Endothelial cell of umbilical vein (primary cell): ENCODE measurements at regions of chr10 and their contacts with region 1.

Region 1: GRCh38 chr10:4767033-4767814 is 58.8 kb upstream of the AKR1E2 start:
- DNase-seq: peak; percentile 74
- H3K4me3 ChIP-seq: no peak overlapping the region
- H3K27ac ChIP-seq: peak overlapping the region; percentile 96
- H3K4me1 ChIP-seq: peaks cover 83% of the 10 kb centered on the region
- H3K27me3 ChIP-seq: no peaks in the 10 kb centered on the region
- CTCF ChIP-seq: peak; percentile 49 to 50
- POLR2A ChIP-seq: no peak

Region 2: GRCh38 chr10:3095373-3096139 is 1671.7 kb before region 1 on chr10:
- CTCF ChIA-PET with region 1: no interaction called
- POLR2A ChIA-PET with region 1: no interaction called
- dilution Hi-C with region 1: no loop called
- intact Hi-C with region 1: loop called (anchors 10 kb)
- DNase-seq: peak; percentile 98
- H3K4me3 ChIP-seq: peak overlapping the region in 1 of 3 experiments; percentile 43
- H3K27ac ChIP-seq: peak overlapping the region; percentile 100
- H3K4me1 ChIP-seq: peaks cover 65% of the 10 kb centered on the region
- H3K27me3 ChIP-seq: no peaks in the 10 kb centered on the region
- CTCF ChIP-seq: no peak
- POLR2A ChIP-seq: peak; percentile 69

Region 3: GRCh38 chr10:3785257-3785850 is 981.9 kb before region 1 on chr10:
- CTCF ChIA-PET with region 1: interaction called, 3 read pairs
- POLR2A ChIA-PET with region 1: interaction called, 9 read pairs
- dilution Hi-C with region 1: no loop called
- intact Hi-C with region 1: loop called (anchors 1 kb)
- DNase-seq: peak; percentile 98
- H3K4me3 ChIP-seq: peak overlapping the region; percentile 22 to 95 (median 44)
- H3K27ac ChIP-seq: peak overlapping the region; percentile 98
- H3K4me1 ChIP-seq: peaks cover 26% of the 10 kb centered on the region
- H3K27me3 ChIP-seq: no peaks in the 10 kb centered on the region
- CTCF ChIP-seq: no peak
- POLR2A ChIP-seq: peak; percentile 99

Region 4: GRCh38 chr10:3935141-3935540 is 832.1 kb before region 1 on chr10:
- CTCF ChIA-PET with region 1: no interaction called
- POLR2A ChIA-PET with region 1: no interaction called
- dilution Hi-C with region 1: no loop called
- intact Hi-C with region 1: loop called (anchors 5 kb)
- DNase-seq: peak; percentile 26
- H3K4me3 ChIP-seq: no peak overlapping the region
- H3K27ac ChIP-seq: peak overlapping the region; percentile 75
- H3K4me1 ChIP-seq: peaks cover 24% of the 10 kb centered on the region
- H3K27me3 ChIP-seq: no peaks in the 10 kb centered on the region
- CTCF ChIP-seq: no peak
- POLR2A ChIP-seq: no peak

Region 5: GRCh38 chr10:4372601-4373000 is 394.6 kb before region 1 on chr10:
- CTCF ChIA-PET with region 1: no interaction called
- POLR2A ChIA-PET with region 1: no interaction called
- dilution Hi-C with region 1: no loop called
- intact Hi-C with region 1: loop called (anchors 2 kb)
- DNase-seq: peak; percentile 93
- H3K4me3 ChIP-seq: no peak overlapping the region
- H3K27ac ChIP-seq: peak overlapping the region; percentile 91
- H3K4me1 ChIP-seq: peaks cover 14% of the 10 kb centered on the region
- H3K27me3 ChIP-seq: no peaks in the 10 kb centered on the region
- CTCF ChIP-seq: no peak
- POLR2A ChIP-seq: no peak

Region 6: DNA sequence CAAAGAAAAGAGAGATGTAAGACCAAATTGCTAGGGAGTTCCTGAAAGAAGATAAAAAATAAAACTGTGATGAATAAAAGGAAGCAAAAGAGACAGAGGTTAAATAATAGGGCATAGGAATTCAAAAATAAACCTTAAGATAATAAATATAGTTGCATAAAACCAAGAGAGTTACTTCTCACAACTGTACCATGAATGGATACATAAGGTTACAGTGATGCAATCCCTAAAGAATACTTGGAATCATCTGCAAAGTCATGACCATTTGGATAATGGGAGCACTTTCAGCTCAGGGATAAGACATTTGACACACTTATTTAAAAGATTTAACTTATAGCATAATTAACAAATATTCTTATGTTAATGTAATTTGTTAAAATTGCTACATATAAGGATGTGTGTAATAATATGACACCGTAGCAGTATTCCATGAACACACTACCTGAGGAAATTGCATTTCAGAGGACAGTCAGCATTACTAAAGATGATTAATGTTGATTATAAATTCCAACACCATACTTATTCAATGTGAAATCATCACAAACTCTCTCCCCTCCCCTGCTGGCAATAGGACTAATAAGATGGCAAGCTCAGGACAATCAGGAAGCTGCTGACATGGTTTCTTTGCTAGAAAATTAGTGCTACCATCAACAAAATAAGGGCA is 143.3 kb before region 1 on chr10:
- CTCF ChIA-PET with region 1: no interaction called
- POLR2A ChIA-PET with region 1: no interaction called
- dilution Hi-C with region 1: no loop called
- intact Hi-C with region 1: no loop called
- DNase-seq: no peak
- H3K4me3 ChIP-seq: no peak overlapping the region
- H3K27ac ChIP-seq: no peak overlapping the region
- H3K4me1 ChIP-seq: no peaks in the 10 kb centered on the region
- H3K27me3 ChIP-seq: no peaks in the 10 kb centered on the region
- CTCF ChIP-seq: no peak
- POLR2A ChIP-seq: no peak

Region 7: GRCh38 chr10:4656576-4657182 is 110.5 kb before region 1 on chr10:
- CTCF ChIA-PET with region 1: interaction called, 46 read pairs
- POLR2A ChIA-PET with region 1: no interaction called
- dilution Hi-C with region 1: no loop called
- intact Hi-C with region 1: no loop called
- DNase-seq: peak; percentile 80
- H3K4me3 ChIP-seq: no peak overlapping the region
- H3K27ac ChIP-seq: peak overlapping the region; percentile 47
- H3K4me1 ChIP-seq: peaks cover 4% of the 10 kb centered on the region
- H3K27me3 ChIP-seq: no peaks in the 10 kb centered on the region
- CTCF ChIP-seq: peak; percentile 77 to 82
- POLR2A ChIP-seq: no peak

Region 8: DNA sequence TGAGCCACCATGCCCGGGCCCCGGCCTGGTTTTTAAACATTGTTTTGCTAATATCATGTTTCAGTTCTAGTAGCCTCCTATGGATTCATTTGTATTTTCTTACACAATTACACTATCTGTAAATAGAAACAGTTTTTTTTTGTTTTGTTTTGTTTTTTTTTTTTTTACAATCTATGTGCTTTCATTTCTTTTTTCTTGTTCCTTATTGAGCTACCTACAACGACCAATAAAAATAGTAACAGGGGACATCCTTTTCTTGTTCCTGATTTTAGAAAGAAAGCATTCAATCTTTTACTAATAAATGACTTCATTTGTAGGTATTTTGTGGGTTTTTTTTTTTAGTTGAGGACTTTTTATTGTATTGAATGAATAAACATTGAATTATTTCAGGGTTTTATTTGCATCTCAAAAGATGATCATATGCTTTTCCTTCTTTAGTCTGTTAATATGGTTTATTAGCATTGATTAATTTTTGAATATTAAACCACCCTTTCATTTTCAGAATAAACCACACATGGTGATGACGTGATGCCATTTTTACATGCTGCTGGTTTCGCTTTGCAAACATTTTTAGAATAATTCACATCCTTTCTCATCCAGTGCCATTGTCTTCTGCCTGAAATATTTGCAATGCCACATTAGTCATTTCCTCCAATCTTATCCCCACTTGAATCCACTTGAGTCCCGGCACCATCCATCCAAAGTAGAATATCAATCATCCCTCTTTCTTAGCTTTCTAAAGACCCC is 40.7 kb after region 1 on chr10:
- CTCF ChIA-PET with region 1: interaction called, 8 read pairs
- POLR2A ChIA-PET with region 1: interaction called, 3 read pairs
- dilution Hi-C with region 1: no loop called
- intact Hi-C with region 1: loop called (anchors 1 kb)
- DNase-seq: peak; percentile 93
- H3K4me3 ChIP-seq: no peak overlapping the region
- H3K27ac ChIP-seq: peak overlapping the region; percentile 95
- H3K4me1 ChIP-seq: peaks cover 53% of the 10 kb centered on the region
- H3K27me3 ChIP-seq: no peaks in the 10 kb centered on the region
- CTCF ChIP-seq: no peak
- POLR2A ChIP-seq: peak; percentile 47